Lower leg skin (tissue), 4 donors: ENCODE measurements at regions of chr2 and their contacts with region 1.

Region 1: DNA sequence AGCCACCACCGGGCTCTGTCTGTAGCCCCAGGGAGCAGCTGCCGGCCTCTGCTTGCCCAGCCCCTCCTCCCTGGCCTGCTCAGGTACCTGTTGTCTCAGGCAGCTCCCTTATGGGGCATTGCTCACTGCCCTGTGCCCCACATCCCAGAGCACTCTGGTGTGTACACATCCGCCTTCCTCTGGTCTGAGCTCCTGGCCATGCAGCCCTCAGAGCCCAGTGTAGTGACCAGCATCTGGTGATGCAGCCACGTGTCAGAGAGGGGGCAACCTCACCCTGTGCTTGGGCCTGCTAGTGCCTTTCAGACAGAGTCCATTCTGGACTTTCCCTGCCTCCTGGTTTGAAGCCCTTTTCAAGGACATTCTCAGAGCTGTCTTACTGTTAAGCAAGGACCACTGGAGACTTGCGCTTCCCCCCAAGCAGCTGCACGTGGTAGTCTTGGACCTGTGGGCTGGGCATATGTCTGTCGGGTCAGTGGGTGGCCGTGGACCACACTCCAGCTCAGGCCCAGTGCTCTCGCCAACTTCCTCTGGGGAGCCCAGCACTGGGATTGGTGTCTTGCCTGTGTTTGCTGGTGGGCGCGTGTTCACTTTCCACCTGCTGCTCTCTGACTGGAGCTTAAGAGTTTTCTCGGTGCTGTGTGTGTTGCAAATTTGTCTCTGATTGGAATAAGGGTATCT is 30.7 kb downstream of the DGKD start:
- DNase-seq: no peak
- H3K4me3 ChIP-seq: no peak overlapping the region
- CTCF ChIP-seq: no peak
- POLR2A ChIP-seq: no peak

Region 2: DNA sequence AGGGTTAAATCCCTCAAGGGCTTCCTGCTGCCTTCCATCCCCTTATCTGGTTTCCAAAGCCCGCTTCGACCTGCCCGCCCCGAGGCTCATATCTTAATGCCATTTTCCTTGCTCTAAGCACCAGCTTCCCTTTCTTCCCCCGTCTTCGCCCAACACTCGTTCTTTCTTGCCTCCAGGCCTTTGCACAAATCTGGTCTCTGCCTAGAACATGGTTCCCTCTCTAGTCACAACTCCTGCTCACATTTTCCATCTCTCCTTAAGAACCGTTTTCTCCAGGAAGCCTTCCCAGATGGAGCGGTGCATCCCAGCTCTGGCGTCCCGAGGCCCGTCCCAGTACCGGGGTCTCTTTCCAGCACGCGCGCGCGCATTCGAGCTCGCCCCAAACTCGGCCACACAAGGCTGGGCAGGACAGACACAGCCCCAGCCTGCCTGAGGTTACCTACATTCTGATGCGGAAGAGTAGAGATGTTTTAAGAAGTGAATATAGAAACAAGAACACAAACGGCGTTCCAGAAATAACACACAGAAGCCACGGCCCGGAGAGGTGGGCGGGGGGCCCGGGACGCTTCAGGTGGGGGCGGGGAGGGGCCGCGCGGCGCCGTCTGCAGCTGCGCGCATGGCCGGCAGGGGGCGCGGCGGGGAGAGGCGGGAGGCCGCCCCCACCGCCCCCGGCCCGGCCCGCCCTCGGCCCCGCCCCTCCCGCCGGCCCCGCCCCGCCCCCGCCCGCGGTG is 31.0 kb before region 1 on chr2 and contains the start of gene DGKD:
- intact Hi-C with region 1: loop called (anchors 1 kb)
- DNase-seq: peak in 1 of 2 donors; percentile 90
- H3K4me3 ChIP-seq: peak within 1 kb of the TSS; percentile 21
- CTCF ChIP-seq: no peak
- POLR2A ChIP-seq: no peak
- total RNA-seq, gene DGKD: 5.8 to 15.2 (median 7.8) TPM

Region 3: DNA sequence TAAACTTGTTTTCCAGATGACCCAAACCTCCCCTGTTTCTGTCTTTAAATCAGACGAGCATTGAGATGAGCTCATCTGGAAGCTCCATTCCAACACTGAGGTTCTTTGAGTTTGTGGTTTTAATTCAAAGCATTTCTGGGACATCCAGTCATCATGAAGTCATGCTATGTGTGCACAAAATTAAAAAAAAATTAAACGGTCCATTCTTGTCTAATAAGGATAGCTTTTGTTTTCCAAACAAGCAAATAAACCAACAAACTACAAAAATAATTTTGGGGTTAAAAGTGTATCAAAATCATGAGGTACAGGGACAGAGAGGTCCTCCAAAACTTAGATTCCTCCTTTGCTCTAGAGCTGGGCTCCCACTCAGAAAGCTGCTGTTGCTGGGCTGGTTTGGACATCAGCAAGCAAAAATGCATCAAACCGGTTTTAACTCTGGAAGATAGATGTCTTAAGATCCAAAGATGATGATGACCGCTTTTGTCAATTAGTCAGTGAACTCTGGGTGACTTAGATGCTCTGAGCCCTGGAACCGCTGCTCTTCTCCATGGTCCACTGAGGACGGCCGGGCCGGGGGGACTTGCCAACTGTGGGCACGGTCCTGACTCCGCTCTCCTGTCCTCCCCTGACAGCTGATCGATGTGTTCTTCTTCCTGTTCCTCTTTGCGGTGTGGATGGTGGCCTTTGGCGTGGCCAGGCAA is 597.6 kb after region 1 on chr2:
- intact Hi-C with region 1: no loop called
- DNase-seq: peak in 1 of 2 donors; percentile 76
- H3K4me3 ChIP-seq: no peak overlapping the region
- CTCF ChIP-seq: no peak
- POLR2A ChIP-seq: no peak